ENCODE measurements at regions of chr6 and their contacts with region 1.

Region 1: GRCh38 chr6:37018198-37019064 is 13.0 kb downstream of the FGD2 start:
- DNase-seq: peak; percentile 89 to 93 (median 92)
- ATAC-seq: peak; percentile 93 to 97 (median 96)
- H3K4me3 ChIP-seq: no peak overlapping the region
- H3K27ac ChIP-seq: peak overlapping the region in 9 of 12 donors; percentile 6 to 66 (median 34)
- H3K4me1 ChIP-seq: peaks cover 0 to 25% (median 14%) of the 10 kb centered on the region in 12 donors
- H3K27me3 ChIP-seq: no peaks in the 10 kb centered on the region
- CTCF ChIP-seq: peak; percentile 72 to 89 (median 78)
- POLR2A ChIP-seq: no peak

Region 2: DNA sequence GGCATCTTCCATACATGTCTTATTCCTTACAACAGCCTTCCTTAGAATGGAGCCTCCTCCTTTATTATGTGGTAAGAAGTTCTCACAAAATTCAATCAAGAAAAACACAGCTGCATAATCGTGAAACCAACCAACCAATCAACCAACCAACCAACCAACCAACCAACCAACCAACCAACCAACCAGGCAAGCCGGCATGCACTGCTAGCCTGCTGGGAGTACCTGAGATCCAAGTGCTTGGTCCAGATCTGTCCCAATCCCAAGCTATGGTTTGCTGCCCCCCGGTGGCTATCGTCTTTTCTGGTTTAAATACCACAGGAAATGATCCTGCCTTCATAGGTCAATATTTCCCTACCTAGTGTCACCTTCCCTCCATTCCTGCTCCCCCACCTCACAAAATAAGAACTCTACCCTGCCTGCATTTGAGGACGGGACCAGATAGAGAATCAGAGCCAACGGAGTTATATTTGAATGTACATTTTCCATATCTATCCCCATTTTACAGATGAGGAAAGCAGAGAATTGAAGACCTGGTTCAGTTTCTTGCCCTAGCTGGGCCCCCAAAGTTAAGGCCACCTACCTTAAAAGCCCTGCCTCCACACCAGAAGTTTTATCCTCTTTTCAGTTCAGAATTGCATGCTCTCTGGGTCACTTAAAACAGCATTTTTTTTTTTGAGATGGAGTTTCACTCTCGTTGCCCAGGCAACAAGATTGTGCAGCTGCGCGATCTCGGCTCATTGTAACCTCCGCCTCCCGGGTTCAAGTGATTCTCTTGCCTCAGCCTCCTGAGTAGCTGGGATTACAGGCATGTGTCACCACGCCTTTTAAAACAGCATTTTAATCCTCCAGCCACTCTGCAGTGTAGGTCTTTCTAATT is 293.7 kb before region 1 on chr6:
- intact Hi-C with region 1: no loop called
- DNase-seq: peak in 3 of 5 donors; percentile 42 to 68 (median 63)
- ATAC-seq: peak in 3 of 4 donors; percentile 49 to 75 (median 55)
- H3K4me3 ChIP-seq: no peak overlapping the region
- H3K27ac ChIP-seq: no peak overlapping the region
- H3K4me1 ChIP-seq: peaks cover 0 to 25% (median 5%) of the 10 kb centered on the region in 12 donors
- H3K27me3 ChIP-seq: no peaks in the 10 kb centered on the region
- CTCF ChIP-seq: peak; percentile 36 to 60 (median 49)
- POLR2A ChIP-seq: no peak

Region 3: DNA sequence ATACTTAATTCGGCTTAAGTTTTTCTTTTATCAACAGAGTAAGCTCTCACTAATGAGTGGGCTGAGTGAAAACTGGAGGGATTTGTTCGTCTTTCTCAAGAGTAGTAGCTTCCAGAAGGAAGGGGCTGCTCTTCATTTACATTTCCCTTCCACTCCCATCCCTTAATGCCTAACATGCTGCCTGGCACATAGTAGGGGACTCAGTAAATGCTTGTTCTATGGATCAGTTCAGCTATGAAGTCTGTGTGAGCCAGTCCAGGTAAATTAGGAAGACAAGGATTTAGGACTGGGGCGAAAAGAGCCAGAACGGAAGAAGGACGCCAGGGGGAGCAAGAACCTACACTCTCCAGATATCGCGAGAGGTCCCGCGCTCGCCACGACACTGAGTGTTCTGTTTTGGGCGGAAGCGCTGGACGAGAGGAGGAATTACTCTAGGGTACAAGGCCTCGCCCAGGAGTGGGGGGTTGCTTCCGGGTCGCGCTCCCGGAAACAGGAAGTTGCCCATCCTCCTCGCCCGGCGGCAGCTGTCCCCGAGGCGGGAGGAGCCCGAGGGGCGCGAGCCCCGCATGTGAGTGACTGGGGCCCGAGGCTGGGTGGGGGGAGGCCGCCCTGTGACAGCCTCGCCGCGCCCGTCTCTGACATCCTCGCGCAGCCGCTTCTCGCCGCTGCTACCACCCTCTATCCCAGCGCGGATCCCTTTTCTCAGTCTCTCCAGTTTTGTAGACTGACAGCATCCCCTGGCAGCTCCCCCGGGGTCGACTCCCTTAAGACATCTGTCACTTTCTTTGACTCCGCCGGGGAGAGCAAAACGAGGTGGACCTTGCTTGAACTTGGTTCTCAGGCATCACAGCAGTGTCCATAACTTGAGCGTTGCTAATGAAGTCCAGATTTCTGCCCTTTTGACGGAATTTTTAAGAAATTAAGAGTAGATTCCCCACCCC is 132.7 kb before region 1 on chr6 and contains the start of gene C6orf89:
- intact Hi-C with region 1: loop called in 7 of 10 experiments (anchors 1 to 10 kb)
- DNase-seq: peak; percentile 97 to 99 (median 98)
- ATAC-seq: peak; percentile 99 to 100 (median 100)
- H3K4me3 ChIP-seq: peak within 1 kb of the TSS; percentile 52 to 93 (median 83)
- H3K27ac ChIP-seq: peak within 1 kb of the TSS; percentile 77 to 95 (median 88)
- H3K4me1 ChIP-seq: peaks cover 0 to 42% (median 26%) of the 10 kb centered on the region in 12 donors
- H3K27me3 ChIP-seq: no peaks in the 10 kb centered on the region
- CTCF ChIP-seq: peak; percentile 73 to 94 (median 87)
- POLR2A ChIP-seq: peak in 1 of 2 donors; percentile 75
- total RNA-seq, gene C6orf89: 54.2 to 86.2 (median 75.5) TPM

Region 4: GRCh38 chr6:36979347-36979742 is 39.1 kb before region 1 on chr6:
- intact Hi-C with region 1: loop called in 3 of 10 experiments (anchors 2 to 5 kb)
- DNase-seq: peak in 4 of 5 donors; percentile 64 to 78 (median 66)
- ATAC-seq: peak; percentile 54 to 72 (median 60)
- H3K4me3 ChIP-seq: no peak overlapping the region
- H3K27ac ChIP-seq: peak overlapping the region in 11 of 12 donors; percentile 22 to 77 (median 51)
- H3K4me1 ChIP-seq: peaks cover 12 to 96% (median 77%) of the 10 kb centered on the region in 12 donors
- H3K27me3 ChIP-seq: no peaks in the 10 kb centered on the region
- CTCF ChIP-seq: peak; percentile 19 to 74 (median 58)
- POLR2A ChIP-seq: no peak

Region 5: DNA sequence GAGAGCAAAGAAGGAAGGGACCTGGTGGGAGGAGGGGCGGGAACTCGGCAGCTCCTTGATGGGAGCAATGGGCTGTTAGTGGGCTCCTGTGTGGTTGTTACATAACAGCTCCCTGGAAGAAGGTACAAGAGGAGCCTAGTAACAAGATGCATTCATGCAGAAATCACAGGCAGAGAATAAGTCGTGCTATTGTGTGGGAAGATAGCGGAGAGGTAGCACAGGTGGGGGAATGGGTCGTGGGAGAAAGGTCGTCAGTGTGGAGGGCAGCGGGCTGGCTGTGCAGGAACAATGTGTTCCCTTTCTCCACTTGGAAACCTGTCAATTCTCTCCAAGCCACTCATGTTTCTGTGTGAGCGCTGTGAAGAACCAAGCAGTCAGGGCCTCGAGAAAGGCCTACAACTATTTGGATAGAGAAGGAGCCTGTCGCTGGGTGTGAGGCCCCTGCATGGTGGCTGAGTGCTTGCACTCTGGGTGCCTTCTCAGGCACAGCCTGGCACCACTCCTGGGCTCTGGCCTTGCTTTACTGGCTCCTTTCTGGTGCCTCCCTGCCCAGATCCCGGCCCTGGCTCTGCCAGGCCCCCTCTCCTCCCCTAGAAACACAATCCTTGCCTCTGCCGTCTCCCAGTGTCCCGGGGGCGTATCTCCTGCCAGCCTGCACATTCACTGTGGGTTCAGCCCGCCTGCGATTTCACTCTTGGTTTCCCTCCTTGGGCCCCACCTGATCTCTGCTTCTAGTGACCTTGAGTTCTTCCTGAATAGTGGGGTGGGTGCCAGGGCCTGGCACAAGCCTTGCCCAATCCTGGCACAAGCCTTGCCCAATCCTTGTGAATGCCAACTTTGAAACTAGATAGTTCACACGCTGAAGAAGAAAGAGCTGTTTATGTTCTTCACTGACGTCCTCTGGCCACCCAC is 20.4 kb before region 1 on chr6:
- intact Hi-C with region 1: loop called in 1 of 10 experiments (anchors 1 kb)
- DNase-seq: peak in 4 of 5 donors; percentile 46 to 87 (median 62)
- ATAC-seq: peak; percentile 42 to 83 (median 74)
- H3K4me3 ChIP-seq: no peak overlapping the region
- H3K27ac ChIP-seq: peak overlapping the region; percentile 73 to 97 (median 92)
- H3K4me1 ChIP-seq: peaks cover 0 to 20% (median 9%) of the 10 kb centered on the region in 12 donors
- H3K27me3 ChIP-seq: no peaks in the 10 kb centered on the region
- CTCF ChIP-seq: no peak
- POLR2A ChIP-seq: no peak

Region 6: GRCh38 chr6:37169496-37170272 is 151.3 kb after region 1 on chr6 and contains the start of gene PIM1:
- intact Hi-C with region 1: loop called in 5 of 10 experiments (anchors 1 to 10 kb)
- DNase-seq: peak; percentile 99 to 100 (median 100)
- ATAC-seq: peak; percentile 90 to 96 (median 92)
- H3K4me3 ChIP-seq: peak within 1 kb of the TSS; percentile 61 to 100 (median 90)
- H3K27ac ChIP-seq: peak within 1 kb of the TSS; percentile 88 to 97 (median 93)
- H3K4me1 ChIP-seq: peaks cover 0 to 42% (median 17%) of the 10 kb centered on the region in 12 donors
- H3K27me3 ChIP-seq: no peaks in the 10 kb centered on the region
- CTCF ChIP-seq: peak in 1 of 12 donors; percentile 25
- POLR2A ChIP-seq: peak; percentile 68 to 95
- total RNA-seq, gene PIM1: 7.0 to 81.8 (median 16.0) TPM

Region 7: GRCh38 chr6:37289931-37290330 is 271.5 kb after region 1 on chr6:
- intact Hi-C with region 1: no loop called
- DNase-seq: no peak
- ATAC-seq: no peak
- H3K4me3 ChIP-seq: no peak overlapping the region
- H3K27ac ChIP-seq: no peak overlapping the region
- H3K4me1 ChIP-seq: peaks cover 0 to 5% (median under 1%) of the 10 kb centered on the region in 12 donors
- H3K27me3 ChIP-seq: no peaks in the 10 kb centered on the region
- CTCF ChIP-seq: no peak
- POLR2A ChIP-seq: no peak